Heart right ventricle (tissue), 16 donors: ENCODE measurements at regions of chr14 and their contacts with region 1.

Region 1: DNA sequence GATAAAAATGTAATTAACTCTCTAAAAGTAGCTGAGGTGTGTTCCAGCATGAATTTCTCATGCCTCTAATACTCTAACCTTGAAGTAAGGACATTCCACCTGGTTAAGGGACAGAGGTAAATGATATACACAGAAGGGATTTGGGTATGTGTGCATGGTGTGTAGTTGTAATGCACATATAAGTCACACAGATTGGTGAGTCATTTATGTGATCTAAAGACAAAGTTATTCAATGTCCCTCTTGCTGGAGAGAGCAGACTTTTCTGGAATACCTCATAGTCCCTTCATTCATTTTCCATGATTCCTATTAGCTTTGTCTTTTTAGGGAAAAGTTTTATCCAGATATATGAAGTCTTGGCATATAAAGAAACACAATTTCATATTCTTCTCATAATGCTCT is 234.9 kb downstream of the SNAPC1 start:
- DNase-seq: no peak
- ATAC-seq: no peak
- H3K4me3 ChIP-seq: no peak overlapping the region
- H3K27ac ChIP-seq: no peak overlapping the region
- H3K4me1 ChIP-seq: no peaks in the 10 kb centered on the region
- H3K27me3 ChIP-seq: no peaks in the 10 kb centered on the region
- CTCF ChIP-seq: no peak

Region 2: DNA sequence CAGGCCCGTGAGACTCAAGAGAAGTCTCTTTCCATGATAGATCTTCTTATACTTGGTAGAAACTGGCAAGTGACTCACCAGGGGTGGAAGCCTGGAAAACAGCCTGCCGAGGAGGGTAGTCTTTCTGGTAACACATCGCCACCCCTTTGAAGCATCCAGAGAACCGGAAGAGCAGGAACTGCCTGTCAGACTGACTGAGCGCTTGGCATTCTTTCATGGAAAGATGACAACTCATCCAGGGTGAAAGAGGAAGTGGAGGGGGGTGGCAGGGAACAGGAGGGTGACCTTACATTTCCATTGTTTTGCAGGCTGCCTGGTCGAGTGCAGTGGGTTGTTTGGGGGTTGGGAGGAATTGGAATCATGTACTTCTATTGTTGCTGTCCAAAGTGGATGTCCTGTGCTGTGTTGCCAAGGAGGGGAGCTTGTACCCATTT is 641.3 kb before region 1 on chr14:
- intact Hi-C with region 1: loop called in 1 of 10 experiments (anchors 5 kb)
- DNase-seq: peak; percentile 23 to 80
- ATAC-seq: peak; percentile 74 to 96 (median 93)
- H3K4me3 ChIP-seq: no peak overlapping the region
- H3K27ac ChIP-seq: peak overlapping the region in 9 of 10 donors; percentile 14 to 75 (median 48)
- H3K4me1 ChIP-seq: peaks cover 0 to 57% (median 30%) of the 10 kb centered on the region in 9 donors
- H3K27me3 ChIP-seq: no peaks in the 10 kb centered on the region
- CTCF ChIP-seq: no peak

Region 3: DNA sequence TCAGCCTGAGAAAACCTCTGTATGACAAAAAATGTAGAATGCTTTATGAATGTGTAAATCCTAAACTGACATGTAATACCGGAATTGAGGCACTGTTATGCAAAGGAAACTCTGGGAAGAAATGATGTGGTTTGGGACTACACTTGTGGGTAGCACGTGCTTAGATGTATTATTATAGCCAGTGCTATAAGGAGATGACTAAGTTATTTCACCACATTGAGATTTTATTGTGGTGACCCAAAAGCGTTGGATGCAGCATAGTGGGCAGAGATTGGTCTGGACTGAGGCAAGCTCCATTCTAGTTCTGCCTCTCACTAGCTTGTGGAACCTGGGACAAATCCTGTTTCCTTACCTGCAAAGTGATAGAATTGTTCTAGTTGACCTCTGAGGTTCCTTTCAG is 62.8 kb before region 1 on chr14:
- intact Hi-C with region 1: no loop called
- DNase-seq: no peak
- ATAC-seq: no peak
- H3K4me3 ChIP-seq: no peak overlapping the region
- H3K27ac ChIP-seq: no peak overlapping the region
- H3K4me1 ChIP-seq: no peaks in the 10 kb centered on the region
- H3K27me3 ChIP-seq: peaks cover 0 to 30% (median 7%) of the 10 kb centered on the region in 7 donors
- CTCF ChIP-seq: no peak